ENCODE measurements at regions of chr7 and their contacts with region 1.

Region 1: DNA sequence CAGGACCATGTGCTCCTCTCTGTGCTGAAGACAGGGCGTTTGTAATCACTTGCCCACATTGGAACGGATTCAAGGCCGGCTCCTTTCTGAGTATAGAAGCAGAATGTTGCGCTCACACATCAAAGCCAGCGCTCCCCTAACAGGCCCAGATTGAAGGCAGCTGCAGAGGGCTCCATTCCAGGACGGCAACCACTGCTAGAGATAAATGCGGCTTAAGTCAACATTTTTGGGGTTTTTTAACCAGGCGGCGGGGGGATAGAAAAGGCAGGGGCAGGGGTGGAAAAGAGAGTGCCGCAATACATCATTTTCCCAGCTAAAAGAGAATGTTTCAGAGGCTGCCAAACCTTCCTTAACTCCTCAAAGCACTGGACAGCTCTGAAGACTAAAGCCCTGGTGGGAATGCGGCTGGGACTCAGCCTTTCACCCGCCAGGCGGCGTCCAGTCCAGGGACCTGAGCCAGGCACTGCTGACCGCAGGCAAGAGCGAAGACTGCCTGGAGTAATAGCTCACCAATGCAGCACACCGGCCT is 189.6 kb downstream of the TNS3 start:
- DNase-seq: peak in 1 of 2 donors; percentile 84
- H3K4me3 ChIP-seq: peak overlapping the region in 1 of 2 donors; percentile 31
- H3K27ac ChIP-seq: peak overlapping the region in 1 of 2 donors; percentile 32
- H3K4me1 ChIP-seq: peaks cover 0 to 3% of the 10 kb centered on the region in 2 donors
- H3K27me3 ChIP-seq: no peaks in the 10 kb centered on the region
- CTCF ChIP-seq: peak; percentile 46 to 73 (median 63)

Region 2: DNA sequence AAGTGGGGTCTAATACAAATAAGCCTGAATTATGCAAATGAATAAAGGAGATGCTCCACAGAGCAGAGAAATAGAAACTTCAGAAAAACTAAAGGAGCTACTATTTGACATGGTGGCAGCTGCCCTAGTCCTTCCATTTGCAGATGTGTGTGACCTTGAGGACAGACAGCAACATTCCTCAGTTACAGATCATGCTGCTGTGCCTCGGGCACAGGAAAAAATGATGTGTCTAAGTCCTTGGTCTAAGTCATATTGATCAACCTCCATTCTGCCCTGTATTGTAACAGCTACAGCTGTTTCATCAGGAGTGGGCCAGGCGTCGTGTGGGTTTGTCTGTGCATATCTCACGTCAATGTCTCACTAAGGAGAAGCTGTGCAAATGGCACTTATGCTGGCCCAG is 520.8 kb before region 1 on chr7:
- intact Hi-C with region 1: no loop called
- DNase-seq: no peak
- H3K4me3 ChIP-seq: no peak overlapping the region
- H3K27ac ChIP-seq: no peak overlapping the region
- H3K4me1 ChIP-seq: no peaks in the 10 kb centered on the region
- H3K27me3 ChIP-seq: no peaks in the 10 kb centered on the region
- CTCF ChIP-seq: no peak

Region 3: GRCh38 chr7:47435889-47436312 is 43.6 kb after region 1 on chr7:
- intact Hi-C with region 1: loop called (anchors 5 kb)
- DNase-seq: peak in 1 of 2 donors; percentile 81
- H3K4me3 ChIP-seq: no peak overlapping the region
- H3K27ac ChIP-seq: no peak overlapping the region
- H3K4me1 ChIP-seq: no peaks in the 10 kb centered on the region
- H3K27me3 ChIP-seq: no peaks in the 10 kb centered on the region
- CTCF ChIP-seq: peak; percentile 60 to 77 (median 67)

Measured in ascending aorta (tissue), 2 donors.